PC-3 (cell line): ENCODE measurements at regions of chr20 and their contacts with region 1.

Region 1: GRCh38 chr20:815914-816606 is 17.5 kb upstream of the FAM110A start:
- DNase-seq: peak; percentile 76
- ATAC-seq: peak; percentile 50
- H3K4me3 ChIP-seq: no peak overlapping the region
- H3K27ac ChIP-seq: no peak overlapping the region
- H3K4me1 ChIP-seq: peaks cover 7% of the 10 kb centered on the region; the same call in 1 of the 2 replicates
- H3K27me3 ChIP-seq: peaks cover 15% of the 10 kb centered on the region
- CTCF ChIP-seq: peak; percentile 98

Region 2: GRCh38 chr20:833450-834150 is 17.5 kb after region 1 on chr20 and contains the start of gene FAM110A:
- CTCF ChIA-PET with region 1: interaction called, 26 read pairs
- POLR2A ChIA-PET with region 1: no interaction called
- intact Hi-C with region 1: no loop called
- DNase-seq: peak; percentile 95
- ATAC-seq: peak; percentile 92
- H3K4me3 ChIP-seq: peak within 1 kb of the TSS; percentile 87
- H3K27ac ChIP-seq: peak within 1 kb of the TSS; percentile 78
- H3K4me1 ChIP-seq: peaks cover 29% of the 10 kb centered on the region
- H3K27me3 ChIP-seq: no peaks in the 10 kb centered on the region
- CTCF ChIP-seq: no peak
- total RNA-seq, gene FAM110A: 23.0 and 28.4 TPM in 2 replicates

Region 3: GRCh38 chr20:856361-857040 is 40.4 kb after region 1 on chr20:
- CTCF ChIA-PET with region 1: interaction called, 8 read pairs
- POLR2A ChIA-PET with region 1: no interaction called
- intact Hi-C with region 1: loop called (anchors 5 kb)
- DNase-seq: peak; percentile 99
- ATAC-seq: peak; percentile 96
- H3K4me3 ChIP-seq: peak overlapping the region; percentile 51
- H3K27ac ChIP-seq: peak overlapping the region; percentile 68
- H3K4me1 ChIP-seq: peaks cover 38% of the 10 kb centered on the region
- H3K27me3 ChIP-seq: no peaks in the 10 kb centered on the region
- CTCF ChIP-seq: no peak

Region 4: DNA sequence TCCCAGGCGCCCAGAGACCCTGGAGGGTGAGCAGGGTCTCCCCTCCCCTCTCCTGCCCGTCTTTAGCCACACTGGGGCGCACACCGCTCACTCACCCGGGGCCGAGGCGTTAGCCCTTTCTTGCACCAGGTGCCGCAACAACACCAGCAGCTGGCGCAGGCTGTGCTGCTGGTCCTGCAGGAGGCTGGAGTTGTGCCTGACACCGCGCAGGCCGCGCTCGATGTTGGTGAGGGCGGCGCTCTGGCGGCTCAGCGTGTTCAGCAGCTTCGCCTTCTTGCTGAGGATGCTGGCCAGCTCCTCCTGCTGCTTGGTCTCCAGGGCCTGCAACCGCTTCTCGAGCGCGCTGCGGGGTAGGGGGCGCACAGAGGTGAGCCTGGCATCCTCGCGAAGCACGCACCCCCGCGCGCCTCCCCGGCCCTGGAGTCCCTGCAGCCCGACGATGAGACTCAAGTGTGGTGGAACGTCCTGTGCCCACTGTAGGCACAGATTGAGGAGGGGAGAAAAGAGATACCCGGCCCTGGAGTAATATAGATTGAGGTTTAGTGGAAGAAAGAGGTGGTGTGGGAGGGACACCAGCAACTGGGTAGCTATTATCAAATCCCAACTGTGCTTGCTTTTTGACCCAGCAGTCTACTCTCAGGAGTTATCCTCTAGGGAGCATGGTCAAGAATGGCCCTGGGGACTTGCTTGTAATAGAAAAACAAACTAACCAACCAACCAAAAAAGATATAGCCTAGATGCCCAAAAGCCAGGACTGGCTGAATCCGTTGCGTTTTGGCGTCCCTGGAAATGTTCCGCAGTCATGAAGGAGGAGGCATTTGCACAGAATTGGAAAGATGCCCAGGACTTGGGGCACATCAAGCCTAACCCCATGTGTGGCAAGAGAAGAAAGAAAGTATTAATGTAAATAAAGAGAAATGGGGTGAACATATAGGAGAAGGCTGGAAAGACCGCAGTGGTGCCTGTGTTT is 69.2 kb after region 1 on chr20:
- CTCF ChIA-PET with region 1: no interaction called
- POLR2A ChIA-PET with region 1: no interaction called
- intact Hi-C with region 1: loop called (anchors 5 kb)
- DNase-seq: peak; percentile 36
- ATAC-seq: peak; percentile 48
- H3K4me3 ChIP-seq: no peak overlapping the region
- H3K27ac ChIP-seq: no peak overlapping the region
- H3K4me1 ChIP-seq: peaks cover 11% of the 10 kb centered on the region
- H3K27me3 ChIP-seq: peaks cover 23% of the 10 kb centered on the region
- CTCF ChIP-seq: peak; percentile 21; the same call in 1 of the 2 replicates

Region 5: DNA sequence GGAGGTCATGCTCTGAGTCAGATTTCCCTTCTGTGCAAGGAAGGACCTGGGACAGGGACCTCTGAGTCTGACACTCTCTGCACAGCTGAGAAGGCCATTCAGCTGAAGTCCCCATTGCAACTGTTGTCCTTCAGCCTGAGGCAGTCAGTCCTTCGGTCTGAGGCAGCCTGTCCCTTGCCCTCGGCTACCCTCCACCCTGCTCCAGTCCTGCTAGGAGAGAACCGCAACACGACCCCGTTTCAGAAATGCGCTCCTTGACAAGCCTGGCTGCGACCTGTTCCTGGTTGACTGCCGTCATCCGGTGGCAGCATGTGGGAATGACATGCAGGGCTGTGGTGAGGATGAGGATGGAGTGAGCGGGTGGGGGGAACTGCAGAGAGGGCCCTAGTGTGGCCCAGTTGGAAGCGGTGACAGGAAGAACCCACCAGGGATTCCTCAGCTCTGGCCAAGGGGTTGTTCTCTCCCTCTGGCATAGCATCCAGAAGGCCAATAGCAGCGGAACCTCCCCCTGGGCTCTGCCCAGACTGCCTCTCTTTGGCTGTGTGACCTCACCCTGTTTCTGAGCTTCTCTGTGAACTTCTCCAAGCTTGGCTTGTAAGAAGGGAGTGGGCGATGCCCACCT is 140.4 kb after region 1 on chr20:
- CTCF ChIA-PET with region 1: interaction called, 18 read pairs
- POLR2A ChIA-PET with region 1: no interaction called
- intact Hi-C with region 1: loop called (anchors 1 kb)
- DNase-seq: peak; percentile 83
- ATAC-seq: peak; percentile 83
- H3K4me3 ChIP-seq: no peak overlapping the region
- H3K27ac ChIP-seq: no peak overlapping the region
- H3K4me1 ChIP-seq: no peaks in the 10 kb centered on the region
- H3K27me3 ChIP-seq: peaks cover 35% of the 10 kb centered on the region
- CTCF ChIP-seq: peak; percentile 100

Region 6: DNA sequence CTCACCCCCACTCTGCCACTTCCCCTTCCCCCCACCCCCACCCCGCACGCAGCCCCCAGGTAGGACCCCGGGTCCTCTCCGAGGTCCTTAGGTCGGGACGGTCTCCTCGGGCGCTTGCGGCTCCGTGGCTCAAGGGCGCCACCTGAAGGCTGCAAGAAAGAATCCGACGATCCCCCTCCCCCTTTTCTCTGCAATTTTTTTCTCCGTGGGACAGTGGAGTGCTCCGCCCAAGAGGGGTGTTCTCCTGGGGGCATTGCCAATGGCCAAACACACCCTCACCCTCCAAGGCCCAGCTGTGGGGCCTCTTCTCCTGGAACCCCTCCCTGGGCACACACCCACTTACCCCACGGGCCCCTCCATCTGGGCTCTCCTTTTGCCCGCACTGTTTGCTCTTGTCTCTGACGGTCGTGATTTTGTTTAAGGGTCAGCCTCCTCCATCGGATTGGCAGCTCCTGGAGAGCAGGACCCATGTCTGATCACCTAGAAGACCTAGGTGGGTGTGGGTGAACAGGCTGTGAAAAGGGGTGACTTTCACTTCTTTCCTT is 369.8 kb after region 1 on chr20:
- CTCF ChIA-PET with region 1: no interaction called
- POLR2A ChIA-PET with region 1: no interaction called
- intact Hi-C with region 1: loop called (anchors 10 kb)
- DNase-seq: peak; percentile 71
- ATAC-seq: peak; percentile 73
- H3K4me3 ChIP-seq: peak overlapping the region; percentile 25; the same call in 1 of the 2 replicates
- H3K27ac ChIP-seq: no peak overlapping the region
- H3K4me1 ChIP-seq: peaks cover 4% of the 10 kb centered on the region; the same call in 1 of the 2 replicates
- H3K27me3 ChIP-seq: peaks cover 24% of the 10 kb centered on the region
- CTCF ChIP-seq: peak; percentile 76

Region 7: DNA sequence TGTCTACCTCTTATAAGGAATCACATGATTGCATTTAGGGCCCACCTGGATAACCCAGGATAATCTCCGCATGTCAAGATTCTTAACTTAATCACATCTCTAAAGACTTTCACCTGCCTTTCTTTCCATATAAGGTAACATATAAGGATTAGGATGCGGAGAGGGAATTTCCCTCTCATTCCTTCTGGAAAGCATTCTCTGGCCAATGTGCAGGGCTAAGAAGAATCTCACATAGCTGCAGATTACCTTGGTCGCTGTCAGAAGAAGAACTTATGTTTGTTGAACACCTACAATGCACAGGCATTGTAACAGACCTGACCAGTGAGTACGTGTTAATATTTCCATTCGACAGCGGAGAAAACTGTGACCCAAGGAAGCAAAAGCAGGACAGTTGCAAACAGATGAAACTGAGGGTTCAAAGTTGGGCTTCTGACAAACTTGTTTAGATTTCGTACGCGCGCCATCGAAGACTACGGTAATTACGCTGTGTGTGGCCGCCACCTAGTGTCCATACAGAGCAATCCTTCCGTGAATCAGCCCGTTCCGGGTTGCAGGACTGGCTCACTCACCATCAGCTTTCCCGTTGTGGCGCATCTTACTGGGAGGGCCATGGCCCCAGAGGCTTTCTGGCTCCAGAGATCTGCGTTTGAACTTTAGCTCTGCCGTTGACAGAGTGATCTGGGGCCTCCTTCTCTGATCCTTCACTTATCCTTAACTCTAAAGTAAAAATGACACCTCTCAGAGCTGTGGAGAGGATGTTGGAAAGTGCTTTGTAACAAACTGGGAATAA is 396.7 kb after region 1 on chr20:
- CTCF ChIA-PET with region 1: no interaction called
- POLR2A ChIA-PET with region 1: no interaction called
- intact Hi-C with region 1: loop called (anchors 1 kb)
- DNase-seq: peak; percentile 87
- ATAC-seq: peak; percentile 95
- H3K4me3 ChIP-seq: no peak overlapping the region
- H3K27ac ChIP-seq: no peak overlapping the region
- H3K4me1 ChIP-seq: 0 out of 2 replicates have a peak, but pooled peaks cover 3% of the 10 kb centered on the region
- H3K27me3 ChIP-seq: no peaks in the 10 kb centered on the region
- CTCF ChIP-seq: peak; percentile 91